Stomach (tissue), 19 donors: ENCODE measurements at regions of chr2 and their contacts with region 1.

Region 1: DNA sequence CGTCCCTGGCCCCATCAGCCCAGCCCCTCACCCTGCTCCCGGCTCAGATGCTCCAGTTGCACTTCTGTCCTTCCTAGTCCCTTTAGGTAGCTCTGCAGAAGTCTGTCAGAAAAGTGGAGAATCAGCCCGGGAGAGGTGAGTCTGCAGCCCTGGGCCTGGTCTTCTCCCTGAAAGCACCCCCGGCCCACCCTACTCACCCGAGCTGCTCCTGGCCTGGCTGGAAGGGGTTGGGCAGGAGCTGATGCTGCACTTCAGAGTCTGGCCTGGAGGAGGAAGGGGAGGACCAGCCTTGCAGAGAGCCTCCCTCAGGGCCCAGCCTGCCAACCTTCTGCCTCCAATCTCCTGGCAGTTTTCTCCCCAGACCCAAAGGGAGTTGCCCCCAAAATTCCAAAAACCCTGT is 15.8 kb downstream of the KHK start:
- DNase-seq: no peak
- H3K4me3 ChIP-seq: no peak overlapping the region
- H3K27ac ChIP-seq: no peak overlapping the region
- H3K4me1 ChIP-seq: no peaks in the 10 kb centered on the region
- H3K27me3 ChIP-seq: peaks cover 0 to 25% (median 0%) of the 10 kb centered on the region in 3 donors
- CTCF ChIP-seq: no peak
- EP300 ChIP-seq: no peak
- POLR2A ChIP-seq: no peak

Region 2: DNA sequence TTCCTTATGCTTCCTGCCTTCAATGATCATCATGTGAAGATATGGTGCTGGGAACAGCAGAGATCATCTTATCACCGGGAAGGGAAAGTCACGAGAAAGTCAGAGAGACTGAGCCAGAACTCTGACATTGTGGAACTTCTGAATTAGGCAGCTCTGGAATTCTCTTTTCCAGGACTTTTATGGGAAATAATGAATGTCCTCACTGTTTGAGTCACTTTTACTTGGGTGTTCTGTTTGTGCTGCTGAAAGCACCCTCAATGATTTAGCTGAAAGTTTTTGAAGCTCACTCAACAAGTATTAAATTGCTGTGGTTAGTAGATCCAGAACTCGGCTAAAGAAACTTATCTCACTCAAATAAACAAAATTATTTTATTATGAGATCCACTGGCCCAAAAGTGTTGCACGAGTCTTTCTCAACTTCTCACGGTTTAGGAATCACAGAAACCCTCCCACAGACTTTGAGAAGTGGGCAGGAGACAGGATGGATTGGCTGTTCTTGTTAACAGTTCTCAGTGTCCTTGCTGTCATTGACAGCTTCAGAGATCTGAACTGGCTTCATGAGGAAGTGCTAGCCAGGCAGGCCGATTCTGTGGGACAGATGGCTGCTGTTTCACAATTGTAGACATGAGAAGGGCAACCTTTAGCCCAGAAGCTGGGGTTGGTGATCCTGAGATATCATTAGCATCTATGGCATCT is 83.2 kb after region 1 on chr2:
- intact Hi-C with region 1: loop called (anchors 10 kb)
- DNase-seq: peak in 1 of 2 donors; percentile 41
- H3K4me3 ChIP-seq: no peak overlapping the region
- H3K27ac ChIP-seq: peak overlapping the region; percentile 25 to 85 (median 73)
- H3K4me1 ChIP-seq: peaks cover 0 to 5% (median 0%) of the 10 kb centered on the region in 4 donors
- H3K27me3 ChIP-seq: peaks cover 0 to 11% (median 0%) of the 10 kb centered on the region in 3 donors
- CTCF ChIP-seq: no peak
- EP300 ChIP-seq: no peak
- POLR2A ChIP-seq: no peak

Region 3: DNA sequence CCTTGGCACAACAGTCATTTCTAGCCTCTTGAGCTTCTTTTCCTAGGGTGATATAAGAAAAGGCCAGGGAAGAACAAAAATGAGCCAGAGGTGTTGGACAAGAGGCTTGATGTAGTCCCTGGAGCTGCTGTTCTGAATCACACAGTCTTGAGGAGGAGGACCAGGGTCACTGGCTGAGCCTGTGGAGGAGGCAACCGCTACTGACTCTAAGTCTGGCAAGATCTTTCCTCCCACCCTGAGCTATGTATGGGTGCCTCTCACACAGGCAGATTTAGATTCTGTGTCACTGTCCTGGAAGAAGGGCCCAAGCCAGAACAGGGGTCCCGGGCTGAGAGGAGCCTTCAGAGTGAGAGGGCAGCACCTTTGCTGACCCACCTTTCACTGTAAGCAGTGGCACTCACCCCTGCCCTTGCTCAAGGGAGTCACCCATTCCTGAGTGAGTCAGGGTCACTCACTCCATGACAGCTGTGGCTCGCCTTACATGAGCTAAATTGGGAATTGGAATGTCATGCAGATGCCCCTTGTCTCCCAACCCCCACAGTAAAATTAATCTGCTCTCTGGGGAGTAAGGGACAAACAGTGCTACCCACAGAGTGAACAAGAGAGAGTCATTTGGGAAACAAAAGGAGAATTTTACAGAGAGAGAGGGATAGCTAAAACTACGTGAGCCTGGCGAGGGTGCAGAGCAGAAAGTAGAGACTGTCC is 179.7 kb after region 1 on chr2 and contains the start of gene TRIM54:
- intact Hi-C with region 1: loop called (anchors 5 kb)
- DNase-seq: no peak
- H3K4me3 ChIP-seq: no peak within 1 kb of the TSS
- H3K27ac ChIP-seq: no peak within 1 kb of the TSS
- H3K4me1 ChIP-seq: peaks cover 0 to 7% (median 0%) of the 10 kb centered on the region in 4 donors
- H3K27me3 ChIP-seq: peaks cover 0 to 70% (median 13%) of the 10 kb centered on the region in 3 donors
- CTCF ChIP-seq: no peak
- EP300 ChIP-seq: no peak
- POLR2A ChIP-seq: no peak
- total RNA-seq, gene TRIM54: 0.87 TPM in 1 of 5 donors, not detected in the others